ENCODE measurements at regions of chr14 and their contacts with region 1.

Region 1: DNA sequence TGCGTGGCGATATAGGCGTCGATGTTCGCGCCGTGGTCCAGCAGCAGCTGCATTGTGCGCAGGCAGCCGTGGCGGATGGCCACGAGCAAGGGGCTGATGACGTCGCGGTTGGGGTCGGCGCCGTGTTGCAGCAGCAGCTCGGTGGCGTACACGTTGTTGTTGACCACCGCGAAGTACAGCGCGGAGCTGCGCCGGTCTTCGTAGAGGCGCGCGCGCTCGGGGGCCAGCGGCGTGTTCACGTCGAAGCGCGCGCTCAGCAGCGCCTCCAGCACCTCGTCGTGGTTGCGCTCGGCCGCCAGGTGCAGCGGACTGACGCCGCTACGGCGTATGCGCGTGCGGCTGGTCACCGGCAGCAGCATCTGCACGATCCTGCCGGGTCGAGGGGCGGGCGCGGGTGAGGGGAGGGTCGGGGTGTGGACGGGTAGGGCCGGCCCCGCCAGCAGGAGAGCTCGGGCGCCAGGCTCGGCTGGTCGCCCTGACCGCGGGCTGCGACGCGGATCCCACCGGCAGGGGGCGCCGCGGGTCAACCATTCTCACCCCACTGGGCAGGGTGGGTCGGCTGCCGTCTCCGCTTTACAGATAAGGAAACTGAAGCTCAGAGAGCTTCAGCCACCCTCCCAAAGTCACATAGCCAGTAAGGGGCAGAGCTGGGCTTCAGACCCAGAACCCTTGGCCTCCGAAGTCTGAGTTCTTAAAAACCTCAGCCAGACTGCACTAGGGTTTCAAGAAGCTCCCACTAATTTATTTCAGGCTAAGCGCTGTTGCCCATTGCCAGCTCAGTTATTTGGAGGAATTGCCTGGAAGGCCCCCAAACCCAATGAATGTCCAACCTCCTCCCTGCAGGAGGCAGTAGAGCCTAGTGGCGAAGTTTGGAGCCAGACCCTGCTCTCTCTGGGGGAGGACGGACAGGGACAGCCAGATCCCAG is 12.4 kb downstream of the FAM181A start:
- DNase-seq: peak; percentile 76
- H3K4me3 ChIP-seq: peak overlapping the region; percentile 33; the same call in 1 of the 2 replicates
- H3K27ac ChIP-seq: no peak overlapping the region
- H3K4me1 ChIP-seq: no peaks in the 10 kb centered on the region
- H3K27me3 ChIP-seq: peaks cover 27% of the 10 kb centered on the region; the same call in 1 of the 2 replicates

Region 2: DNA sequence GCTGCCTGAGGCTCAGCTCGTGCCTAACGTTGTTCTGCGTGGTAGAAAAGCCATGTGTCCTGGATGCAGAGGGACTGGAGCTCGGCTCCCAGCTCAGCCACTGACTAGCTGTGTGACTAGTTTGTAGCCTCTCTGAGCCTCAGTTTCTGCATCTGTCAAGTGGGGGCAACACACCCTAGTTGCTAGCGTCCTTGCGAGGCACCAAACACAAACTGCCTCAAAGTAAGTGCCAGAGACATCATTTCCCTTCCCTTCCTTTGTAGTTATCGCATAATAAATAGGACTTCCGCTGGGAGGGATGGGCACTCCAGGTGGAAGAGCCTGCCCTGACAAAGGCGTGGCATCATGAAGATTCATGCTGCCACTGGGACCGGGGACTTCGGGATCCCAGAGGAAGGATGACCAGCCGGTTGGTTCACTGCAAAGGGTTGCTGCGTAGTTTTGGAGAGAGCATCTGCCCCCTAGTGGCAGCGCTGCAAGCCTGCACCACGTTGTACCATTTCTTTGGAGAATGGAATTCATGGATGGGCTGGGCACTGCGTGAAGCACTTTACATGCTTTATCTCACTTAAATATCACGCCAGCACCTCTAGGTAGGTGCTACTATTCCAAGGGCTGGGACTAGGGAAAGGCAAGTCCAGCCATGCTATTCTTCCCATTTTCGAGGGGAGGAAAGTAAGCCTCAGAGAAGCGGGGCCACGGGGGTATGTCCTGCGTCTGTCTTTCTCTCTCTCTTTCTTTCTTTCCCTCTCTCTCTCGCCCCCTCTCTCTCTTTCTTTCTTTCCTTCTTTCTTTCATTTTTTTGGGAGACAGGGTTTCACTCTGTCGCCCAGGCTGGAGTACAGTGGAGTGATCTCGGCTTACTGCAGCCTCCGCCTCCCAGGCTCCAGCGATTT is 62.2 kb after region 1 on chr14:
- in situ Hi-C with region 1: loop called (anchors 5 kb)
- DNase-seq: peak; percentile 84
- H3K4me3 ChIP-seq: no peak overlapping the region
- H3K27ac ChIP-seq: no peak overlapping the region
- H3K4me1 ChIP-seq: no peaks in the 10 kb centered on the region
- H3K27me3 ChIP-seq: peaks cover 14% of the 10 kb centered on the region; the same call in 1 of the 2 replicates

Region 3: GRCh38 chr14:94136575-94137331 is 197.2 kb after region 1 on chr14:
- in situ Hi-C with region 1: loop called (anchors 10 kb)
- DNase-seq: peak; percentile 86
- H3K4me3 ChIP-seq: no peak overlapping the region
- H3K27ac ChIP-seq: no peak overlapping the region
- H3K4me1 ChIP-seq: no peaks in the 10 kb centered on the region
- H3K27me3 ChIP-seq: no peaks in the 10 kb centered on the region

Region 4: GRCh38 chr14:94239406-94239805 is 299.8 kb after region 1 on chr14:
- in situ Hi-C with region 1: no loop called
- DNase-seq: peak; percentile 2
- H3K4me3 ChIP-seq: no peak overlapping the region
- H3K27ac ChIP-seq: no peak overlapping the region
- H3K4me1 ChIP-seq: no peaks in the 10 kb centered on the region
- H3K27me3 ChIP-seq: no peaks in the 10 kb centered on the region